Posterior cingulate gyrus (tissue), 11 donors: ENCODE measurements at regions of chr2 and their contacts with region 1.

Region 1: GRCh38 chr2:152395103-152395502 is 60.1 kb downstream of the FMNL2 start:
- DNase-seq: peak in 1 of 10 donors; percentile 28

Region 2: GRCh38 chr2:152347076-152347475 is 48.0 kb before region 1 on chr2:
- intact Hi-C with region 1: loop called (anchors 5 kb)
- DNase-seq: no peak